Esophagus muscularis mucosa (tissue), 4 donors: ENCODE measurements at regions of chr19 and their contacts with region 1.

Region 1: DNA sequence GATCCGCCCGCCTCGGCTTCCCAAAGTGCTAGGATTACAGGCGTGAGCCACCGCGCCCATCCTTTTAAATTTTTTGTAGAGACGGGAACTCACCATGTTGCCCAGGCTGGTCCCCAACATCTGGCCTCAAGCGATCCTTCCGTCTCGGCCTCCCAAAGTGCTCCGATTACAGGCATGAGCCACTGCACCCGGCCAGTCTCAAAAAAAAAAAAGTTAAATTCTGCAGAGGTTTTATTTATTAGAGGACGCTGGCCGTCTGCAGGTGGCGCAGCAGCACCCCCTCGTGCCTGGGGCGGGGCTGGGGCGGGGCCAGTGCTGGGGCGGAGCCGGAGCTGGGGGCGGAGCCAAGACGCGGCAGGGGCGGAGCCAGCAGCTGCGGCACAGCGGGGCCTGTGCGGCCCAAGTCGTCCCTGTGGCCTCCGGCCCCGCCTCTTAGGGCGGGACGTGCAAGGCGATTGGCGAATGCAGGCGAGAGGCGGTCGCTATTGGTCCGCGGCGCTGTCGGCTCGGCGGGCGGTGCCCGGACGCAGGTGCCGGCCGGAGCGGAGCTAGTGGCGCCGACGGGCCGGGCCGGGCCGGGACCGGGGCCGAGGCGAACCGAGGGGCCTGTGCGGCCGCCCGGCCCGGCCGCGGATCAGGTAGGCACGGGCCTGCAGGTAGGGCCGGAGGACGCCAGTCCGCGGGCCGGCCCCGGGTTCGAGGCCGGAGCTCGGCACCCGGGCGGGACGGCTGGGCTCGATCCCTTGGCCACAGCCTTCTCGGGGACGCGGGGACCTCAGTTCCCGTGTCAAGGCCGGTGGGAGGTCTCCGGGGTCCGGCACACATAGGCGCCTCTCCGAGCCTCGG is at the start of gene MARCHF2:
- DNase-seq: peak; percentile 99
- H3K4me3 ChIP-seq: peak within 1 kb of the TSS; percentile 89 to 94 (median 92)
- H3K27ac ChIP-seq: peak within 1 kb of the TSS; percentile 82 to 94 (median 90)
- H3K4me1 ChIP-seq: peaks cover 38 to 55% (median 50%) of the 10 kb centered on the region in 4 donors
- H3K27me3 ChIP-seq: no peaks in the 10 kb centered on the region
- CTCF ChIP-seq: peak; percentile 71 to 82 (median 79)
- EP300 ChIP-seq: no peak
- POLR2A ChIP-seq: no peak
- total RNA-seq, gene MARCHF2: 227 to 286 (median 247) TPM

Region 2: GRCh38 chr19:8444645-8445487 is 31.9 kb after region 1 on chr19 and contains the start of gene HNRNPM:
- intact Hi-C with region 1: loop called (anchors 5 kb)
- DNase-seq: peak; percentile 100
- H3K4me3 ChIP-seq: peak within 1 kb of the TSS; percentile 81 to 99 (median 90)
- H3K27ac ChIP-seq: peak within 1 kb of the TSS; percentile 94 to 98 (median 97)
- H3K4me1 ChIP-seq: peaks cover 42 to 49% (median 46%) of the 10 kb centered on the region in 4 donors
- H3K27me3 ChIP-seq: no peaks in the 10 kb centered on the region
- CTCF ChIP-seq: peak in 1 of 3 experiments; percentile 13
- EP300 ChIP-seq: no peak
- POLR2A ChIP-seq: peak; percentile 91
- total RNA-seq, gene HNRNPM: 103 to 126 (median 116) TPM

Region 3: DNA sequence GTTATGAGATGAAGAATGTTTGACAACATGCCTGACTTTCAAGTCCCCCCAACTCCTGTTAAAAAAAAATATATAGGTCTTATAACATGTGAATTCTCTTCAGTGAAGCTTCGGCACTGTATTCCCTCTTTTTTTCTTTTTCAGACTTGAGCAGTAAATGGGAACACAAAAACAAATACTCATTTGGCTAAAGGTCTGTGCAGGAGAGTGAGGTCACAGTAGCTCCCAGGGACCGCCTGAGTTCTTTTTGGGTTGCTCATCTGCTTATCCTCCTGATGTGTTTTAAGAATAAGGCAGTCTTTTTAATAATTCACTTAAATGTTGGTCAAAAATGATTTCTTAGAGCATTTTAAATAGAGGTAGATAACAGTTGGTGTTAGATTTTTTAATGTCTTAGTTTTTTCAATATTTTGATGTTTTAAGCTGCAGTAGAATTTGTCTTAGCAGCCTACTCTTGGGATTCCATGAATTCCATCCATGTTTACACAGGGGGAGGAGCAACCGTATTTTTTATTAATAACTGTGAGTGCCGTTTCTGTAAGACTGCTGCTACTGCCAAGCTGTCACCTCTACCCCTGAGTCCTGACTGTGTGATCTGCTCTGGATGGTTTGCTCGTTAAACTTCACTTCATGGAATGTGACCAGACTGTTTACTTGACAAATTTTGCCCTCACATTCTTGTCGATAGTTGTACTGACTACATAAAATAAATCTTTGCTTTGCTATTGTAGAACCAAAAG is 46.7 kb after region 1 on chr19:
- intact Hi-C with region 1: no loop called
- DNase-seq: no peak
- H3K4me3 ChIP-seq: peak overlapping the region; percentile 2 to 25 (median 12)
- H3K27ac ChIP-seq: peak overlapping the region; percentile 64 to 73 (median 68)
- H3K4me1 ChIP-seq: peaks cover 79 to 88% (median 83%) of the 10 kb centered on the region in 4 donors
- H3K27me3 ChIP-seq: no peaks in the 10 kb centered on the region
- CTCF ChIP-seq: no peak
- EP300 ChIP-seq: no peak
- POLR2A ChIP-seq: no peak